Colonic mucosa (tissue), 4 donors: ENCODE measurements at regions of chr4 and their contacts with region 1.

Region 1: GRCh38 chr4:110211007-110211769 is 12.8 kb upstream of the ELOVL6 start:
- DNase-seq: peak; percentile 30
- H3K4me3 ChIP-seq: no peak overlapping the region
- H3K27ac ChIP-seq: no peak overlapping the region
- H3K4me1 ChIP-seq: no peaks in the 10 kb centered on the region
- H3K27me3 ChIP-seq: no peaks in the 10 kb centered on the region
- CTCF ChIP-seq: peak; percentile 73

Region 2: GRCh38 chr4:110005461-110006056 is 205.6 kb before region 1 on chr4:
- intact Hi-C with region 1: loop called (anchors 5 kb)
- DNase-seq: no peak
- H3K4me3 ChIP-seq: no peak overlapping the region
- H3K27ac ChIP-seq: no peak overlapping the region
- H3K4me1 ChIP-seq: no peaks in the 10 kb centered on the region
- H3K27me3 ChIP-seq: no peaks in the 10 kb centered on the region
- CTCF ChIP-seq: peak; percentile 74

Region 3: DNA sequence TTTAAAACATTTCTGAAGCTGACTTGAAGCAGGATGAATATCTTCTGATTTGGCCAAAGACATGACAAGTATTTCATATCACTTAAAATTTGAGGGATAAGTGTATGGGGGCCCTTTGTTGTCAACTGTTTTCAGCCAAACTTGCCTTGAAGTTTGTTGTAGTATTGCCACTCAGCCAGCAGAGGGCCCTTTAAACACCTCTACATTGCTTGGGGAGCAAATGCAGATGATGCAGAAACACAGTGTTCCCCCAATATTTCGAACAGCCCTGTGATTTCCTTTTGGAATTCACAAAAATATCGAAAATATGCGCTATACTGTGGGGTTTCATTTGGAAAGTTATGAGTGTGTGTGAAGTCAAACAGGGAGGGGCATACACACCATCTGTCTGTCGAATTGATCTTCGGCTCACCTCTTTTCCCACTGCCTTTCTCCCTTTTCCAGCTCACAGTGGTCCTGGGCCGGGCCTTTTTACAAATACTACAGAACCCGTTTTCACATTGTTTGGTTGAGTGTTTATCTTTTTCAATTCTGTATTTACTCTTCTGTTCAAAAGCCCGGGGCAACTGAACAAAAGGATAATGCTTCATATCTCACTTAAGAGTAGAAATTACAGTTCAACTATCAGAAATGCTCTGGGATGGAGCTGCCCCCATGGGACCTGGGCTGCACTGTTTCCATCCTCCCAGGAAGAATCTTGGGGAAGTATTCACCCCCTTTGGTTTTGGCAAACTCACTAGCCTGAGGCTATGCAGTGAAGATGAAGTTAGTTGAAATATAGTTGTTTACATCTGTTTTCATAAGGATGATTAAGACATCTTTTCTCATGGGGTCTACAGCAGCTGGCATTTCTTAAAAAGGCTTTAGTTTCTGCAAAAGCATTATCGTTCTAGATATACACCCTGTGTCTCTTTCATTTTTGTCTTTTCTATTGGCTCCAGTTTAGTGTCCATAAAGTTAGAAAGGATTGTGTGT is 160.9 kb before region 1 on chr4:
- intact Hi-C with region 1: loop called (anchors 5 kb)
- DNase-seq: peak; percentile 58
- H3K4me3 ChIP-seq: no peak overlapping the region
- H3K27ac ChIP-seq: no peak overlapping the region
- H3K4me1 ChIP-seq: no peaks in the 10 kb centered on the region
- H3K27me3 ChIP-seq: no peaks in the 10 kb centered on the region
- CTCF ChIP-seq: peak; percentile 70

Region 4: GRCh38 chr4:110510955-110511544 is 299.9 kb after region 1 on chr4:
- intact Hi-C with region 1: loop called (anchors 5 kb)
- DNase-seq: no peak
- H3K4me3 ChIP-seq: no peak overlapping the region
- H3K27ac ChIP-seq: no peak overlapping the region
- H3K4me1 ChIP-seq: no peaks in the 10 kb centered on the region
- H3K27me3 ChIP-seq: no peaks in the 10 kb centered on the region
- CTCF ChIP-seq: peak; percentile 55

Region 5: DNA sequence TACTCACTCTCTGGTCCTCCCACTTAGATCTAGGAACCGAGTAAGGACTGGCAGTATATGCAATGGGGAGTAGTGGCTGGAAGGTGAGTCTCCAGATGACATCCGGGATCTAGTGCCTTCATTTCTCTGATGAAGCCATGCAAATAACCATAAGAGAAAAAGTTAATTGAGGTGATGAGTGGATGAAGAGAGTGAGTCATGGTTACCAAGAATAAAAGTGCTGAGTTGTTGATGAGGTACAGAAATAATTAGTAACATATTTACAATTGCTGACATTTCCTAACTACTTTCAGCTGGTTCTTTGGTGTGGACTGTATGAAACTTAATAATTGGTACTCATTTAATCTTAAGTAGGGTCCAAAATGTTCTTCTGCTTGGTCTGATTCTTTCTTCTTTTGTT is 558.4 kb after region 1 on chr4:
- intact Hi-C with region 1: no loop called
- DNase-seq: no peak
- H3K4me3 ChIP-seq: no peak overlapping the region
- H3K27ac ChIP-seq: no peak overlapping the region
- H3K4me1 ChIP-seq: no peaks in the 10 kb centered on the region
- H3K27me3 ChIP-seq: no peaks in the 10 kb centered on the region
- CTCF ChIP-seq: no peak